GM10248 (cell line): ENCODE measurements at regions of chr13 and their contacts with region 1.

Region 1: DNA sequence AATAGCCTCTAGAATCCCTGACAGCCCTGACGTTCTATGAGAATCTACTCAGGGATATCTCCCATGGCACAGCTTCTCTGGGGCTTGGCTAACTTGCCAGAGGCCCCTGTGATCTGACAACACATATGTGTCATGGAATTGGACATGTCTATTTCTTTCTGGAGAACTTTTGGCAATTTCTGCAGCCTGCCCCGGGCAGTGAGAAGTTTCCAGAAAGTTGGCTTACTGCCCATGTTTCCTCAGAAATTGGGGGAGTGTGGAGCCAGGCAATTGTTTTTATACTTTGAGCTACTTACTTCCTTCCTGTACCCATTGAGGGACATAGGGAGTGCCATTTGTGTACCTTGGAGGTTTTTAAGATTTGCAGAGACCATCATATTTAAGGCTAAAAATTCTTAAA is 98.9 kb downstream of the FLT1 start:
- DNase-seq: no peak
- CTCF ChIP-seq: no peak

Region 2: DNA sequence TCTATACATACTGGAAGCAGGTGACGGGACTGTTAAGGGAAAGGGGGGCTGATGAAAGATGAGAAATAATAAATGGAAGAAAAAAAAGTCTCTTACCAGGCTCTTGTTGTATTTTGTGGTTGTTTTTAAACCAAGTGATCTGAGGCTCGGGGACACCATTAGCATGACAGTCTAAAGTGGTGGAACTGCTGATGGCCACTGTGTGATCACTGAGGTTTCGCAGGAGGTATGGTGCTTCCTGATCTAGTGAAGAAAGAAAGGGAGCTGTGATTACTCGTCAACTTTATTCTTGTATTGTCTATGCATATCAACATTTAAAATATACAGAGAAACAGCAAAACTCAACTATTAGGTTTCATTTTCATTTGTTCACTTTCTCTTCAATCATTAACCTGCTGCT is 11.3 kb before region 1 on chr13:
- CTCF ChIA-PET with region 1: interaction called, 15 read pairs
- POLR2A ChIA-PET with region 1: no interaction called
- DNase-seq: peak; percentile 18
- CTCF ChIP-seq: no peak

Region 3: GRCh38 chr13:28574617-28575142 is 178.6 kb after region 1 on chr13:
- CTCF ChIA-PET with region 1: no interaction called
- POLR2A ChIA-PET with region 1: no interaction called
- DNase-seq: no peak
- CTCF ChIP-seq: no peak